ENCODE measurements at regions of chr6 and their contacts with region 1.

Region 1: GRCh38 chr6:125790358-125791150 is at the start of gene NCOA7:
- DNase-seq: peak; percentile 80
- ATAC-seq: peak; percentile 81
- H3K4me3 Mint-ChIP-seq: peak within 1 kb of the TSS; percentile 94
- H3K27ac Mint-ChIP-seq: peak within 1 kb of the TSS; percentile 98
- H3K4me1 Mint-ChIP-seq: peaks cover 52% of the 10 kb centered on the region
- H3K27me3 Mint-ChIP-seq: no peaks in the 10 kb centered on the region
- CTCF ChIP-seq: no peak
- total RNA-seq, gene NCOA7: 43.4 to 44.9 TPM

Region 2: DNA sequence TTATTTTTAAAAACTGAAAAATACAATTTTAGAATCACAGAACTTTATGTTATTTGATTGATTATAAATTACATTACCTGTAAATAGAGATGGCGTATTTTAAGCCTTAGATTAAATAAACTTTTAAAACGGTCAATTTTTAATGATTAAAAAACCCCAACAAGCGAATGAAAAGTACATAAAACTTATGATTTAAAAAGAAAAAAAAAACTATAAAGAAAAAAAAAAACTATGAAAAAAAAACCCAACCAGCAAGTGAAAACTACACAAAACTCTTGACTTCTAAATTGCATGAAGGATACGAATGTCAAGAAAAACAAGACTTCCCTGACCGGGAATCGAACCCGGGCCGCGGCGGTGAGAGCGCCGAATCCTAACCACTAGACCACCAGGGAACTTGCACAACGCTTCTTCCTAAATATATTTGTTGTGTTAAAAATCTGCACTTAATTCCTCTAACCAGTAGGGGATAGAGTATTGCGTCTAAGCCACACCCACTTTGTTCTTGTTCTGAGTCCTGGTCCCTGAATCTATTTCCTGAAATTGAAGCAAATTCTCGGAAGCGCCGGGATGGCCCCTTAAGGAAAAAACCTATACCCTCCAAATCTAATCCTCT is 10.5 kb before region 1 on chr6:
- CTCF ChIA-PET with region 1: interaction called, 75 read pairs
- POLR2A ChIA-PET with region 1: interaction called, 124 read pairs
- intact Hi-C with region 1: no loop called
- DNase-seq: peak; percentile 88
- ATAC-seq: peak; percentile 82
- H3K4me3 Mint-ChIP-seq: no peak overlapping the region
- H3K27ac Mint-ChIP-seq: no peak overlapping the region
- H3K4me1 Mint-ChIP-seq: peaks cover 16% of the 10 kb centered on the region
- H3K27me3 Mint-ChIP-seq: no peaks in the 10 kb centered on the region
- CTCF ChIP-seq: no peak

Region 3: GRCh38 chr6:125802943-125803377 is 12.4 kb after region 1 on chr6:
- CTCF ChIA-PET with region 1: interaction called, 8 read pairs
- POLR2A ChIA-PET with region 1: interaction called, 18 read pairs
- intact Hi-C with region 1: no loop called
- DNase-seq: no peak
- ATAC-seq: no peak
- H3K4me3 Mint-ChIP-seq: no peak overlapping the region
- H3K27ac Mint-ChIP-seq: no peak overlapping the region
- H3K4me1 Mint-ChIP-seq: peaks cover 60% of the 10 kb centered on the region
- H3K27me3 Mint-ChIP-seq: no peaks in the 10 kb centered on the region
- CTCF ChIP-seq: no peak

Region 4: GRCh38 chr6:125888989-125889656 is 98.6 kb after region 1 on chr6:
- CTCF ChIA-PET with region 1: interaction called, 10 read pairs
- POLR2A ChIA-PET with region 1: no interaction called
- intact Hi-C with region 1: no loop called
- DNase-seq: peak; percentile 29
- ATAC-seq: no peak
- H3K4me3 Mint-ChIP-seq: no peak overlapping the region
- H3K27ac Mint-ChIP-seq: no peak overlapping the region
- H3K4me1 Mint-ChIP-seq: no peaks in the 10 kb centered on the region
- H3K27me3 Mint-ChIP-seq: no peaks in the 10 kb centered on the region
- CTCF ChIP-seq: peak; percentile 65

Region 5: GRCh38 chr6:125918681-125919566 is 128.4 kb after region 1 on chr6:
- CTCF ChIA-PET with region 1: interaction called, 11 read pairs
- POLR2A ChIA-PET with region 1: interaction called, 9 read pairs
- intact Hi-C with region 1: loop called (anchors 5 kb)
- DNase-seq: peak; percentile 67
- ATAC-seq: peak; percentile 97
- H3K4me3 Mint-ChIP-seq: peak overlapping the region; percentile 85
- H3K27ac Mint-ChIP-seq: peak overlapping the region; percentile 97
- H3K4me1 Mint-ChIP-seq: peaks cover 34% of the 10 kb centered on the region
- H3K27me3 Mint-ChIP-seq: no peaks in the 10 kb centered on the region
- CTCF ChIP-seq: no peak

Region 6: GRCh38 chr6:125986300-125987025 is 195.9 kb after region 1 on chr6 and contains the start of gene TRMT11:
- CTCF ChIA-PET with region 1: interaction called, 10 read pairs
- POLR2A ChIA-PET with region 1: interaction called, 5 read pairs
- intact Hi-C with region 1: no loop called
- DNase-seq: peak; percentile 87
- ATAC-seq: peak; percentile 96
- H3K4me3 Mint-ChIP-seq: no peak within 1 kb of the TSS
- H3K27ac Mint-ChIP-seq: peak within 1 kb of the TSS; percentile 21
- H3K4me1 Mint-ChIP-seq: peaks cover 20% of the 10 kb centered on the region
- H3K27me3 Mint-ChIP-seq: no peaks in the 10 kb centered on the region
- CTCF ChIP-seq: no peak
- total RNA-seq, gene TRMT11: 41.5 to 49.1 TPM

Measured in activated CD8-positive, alpha-beta T cell treated with anti-CD3 and anti-CD28 coated beads for 36 hours (primary cell).